ENCODE measurements at regions of chr2 and their contacts with region 1.

Region 1: GRCh38 chr2:121400201-121400600 is 115.2 kb upstream of the TFCP2L1 start:
- DNase-seq: peak; percentile 61
- H3K4me3 ChIP-seq: no peak overlapping the region
- H3K27me3 ChIP-seq: no peaks in the 10 kb centered on the region
- CTCF ChIP-seq: no peak

Region 2: DNA sequence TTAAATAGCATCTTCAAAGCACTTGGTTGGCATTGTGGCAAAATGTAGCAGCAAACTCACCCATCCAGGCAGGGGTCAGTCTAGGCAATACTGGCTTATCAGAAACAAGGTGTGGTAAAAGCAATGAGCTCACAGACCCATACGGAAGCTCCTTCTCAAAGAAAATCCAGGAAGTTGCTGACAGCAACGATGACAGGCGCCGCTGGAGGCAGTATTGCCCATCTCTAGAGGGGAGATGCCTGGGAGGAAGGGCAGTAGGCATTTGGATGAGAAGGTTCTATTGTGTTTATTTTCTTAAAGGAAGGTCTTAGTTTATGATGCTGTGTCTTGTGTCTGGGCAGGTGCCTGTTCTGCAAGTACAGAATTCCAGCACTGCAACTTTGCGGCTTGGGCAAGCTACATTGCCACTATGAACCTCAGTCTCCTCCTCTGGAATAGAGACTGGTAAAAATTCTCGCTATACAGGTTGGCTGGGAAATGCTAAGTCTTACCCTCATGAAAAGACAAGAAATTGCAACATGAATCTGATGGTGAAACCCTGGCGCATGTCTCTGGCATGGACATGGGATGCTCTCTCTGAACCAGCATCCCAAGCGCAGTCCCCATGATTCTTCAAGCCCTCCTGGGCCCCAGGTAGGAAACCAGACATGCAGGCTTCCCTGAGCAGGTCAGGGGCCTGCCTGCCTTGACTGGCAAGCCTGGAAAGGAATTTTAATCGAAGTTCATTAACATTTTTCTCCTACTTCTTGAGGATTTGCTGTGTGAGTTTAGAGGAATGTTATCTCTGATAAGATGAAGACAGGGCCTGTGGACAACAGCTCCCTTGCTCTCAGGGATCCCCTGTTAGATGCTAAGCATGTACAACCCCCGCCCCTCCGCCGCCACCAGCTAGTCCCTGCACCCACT is 271.2 kb before region 1 on chr2:
- CTCF ChIA-PET with region 1: no interaction called
- POLR2A ChIA-PET with region 1: no interaction called
- DNase-seq: no peak
- H3K4me3 ChIP-seq: no peak overlapping the region
- H3K27me3 ChIP-seq: peaks cover 6% of the 10 kb centered on the region
- CTCF ChIP-seq: peak; percentile 46

Region 3: DNA sequence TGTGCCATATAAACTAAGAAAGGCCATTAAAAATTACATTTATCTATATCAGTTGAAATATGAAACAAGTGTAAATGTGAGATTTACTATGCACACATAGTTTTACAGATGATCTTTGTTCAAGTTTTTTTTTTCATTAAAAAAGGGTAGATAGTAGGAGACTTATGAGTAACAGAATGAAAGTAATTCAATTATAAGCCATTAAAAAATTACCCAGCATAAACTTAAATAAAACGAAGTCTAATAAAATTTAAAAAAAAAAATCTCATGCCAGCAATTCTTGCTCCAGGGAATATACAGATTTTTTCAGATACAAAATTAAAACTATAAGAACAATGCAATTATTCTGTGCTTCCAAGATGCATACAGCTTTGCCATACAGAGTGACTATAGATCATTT is 12.1 kb after region 1 on chr2:
- CTCF ChIA-PET with region 1: interaction called, 12 read pairs
- POLR2A ChIA-PET with region 1: no interaction called
- DNase-seq: no peak
- H3K4me3 ChIP-seq: no peak overlapping the region
- H3K27me3 ChIP-seq: no peaks in the 10 kb centered on the region
- CTCF ChIP-seq: no peak